IMR-90 (cell line): ENCODE measurements at regions of chr14 and their contacts with region 1.

Region 1: GRCh38 chr14:92951912-92952471 is 29.0 kb downstream of the CHGA start:
- DNase-seq: peak; percentile 48
- ATAC-seq: peak; percentile 99
- H3K4me3 ChIP-seq: no peak overlapping the region
- H3K27ac ChIP-seq: no peak overlapping the region
- H3K4me1 ChIP-seq: no peaks in the 10 kb centered on the region
- H3K27me3 ChIP-seq: no peaks in the 10 kb centered on the region
- CTCF ChIP-seq: peak; percentile 97
- POLR2A ChIP-seq: 0 out of 2 replicates have a peak, but pooled peaks have one; percentile 55
- RAD21 ChIP-seq: peak; percentile 99

Region 2: DNA sequence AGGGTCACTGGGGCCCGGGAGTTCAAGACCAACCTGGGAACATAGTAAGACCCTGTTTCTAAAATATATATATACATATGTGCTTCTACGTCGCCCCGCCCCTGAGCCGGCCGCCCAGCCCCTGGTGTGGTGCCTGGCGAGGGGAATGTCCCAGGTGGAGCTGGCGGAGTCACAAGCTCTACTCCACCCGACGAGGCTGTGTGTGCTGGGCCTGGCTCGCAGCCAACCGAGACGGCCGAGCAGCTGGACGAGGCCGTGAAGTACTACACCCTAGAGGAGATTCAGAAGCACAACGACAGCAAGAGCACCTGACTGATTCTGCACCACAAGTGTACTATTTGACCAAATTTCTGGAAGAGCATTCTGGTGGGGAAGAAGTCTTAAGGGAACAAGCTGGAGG is 185.9 kb after region 1 on chr14:
- CTCF ChIA-PET with region 1: interaction called, 9 read pairs
- POLR2A ChIA-PET with region 1: interaction called, 3 read pairs
- dilution Hi-C with region 1: no loop called
- in situ Hi-C with region 1: loop called (anchors 5 kb)
- intact Hi-C with region 1: loop called (anchors 1 kb)
- DNase-seq: peak; percentile 12
- ATAC-seq: no peak
- H3K4me3 ChIP-seq: no peak overlapping the region
- H3K27ac ChIP-seq: no peak overlapping the region
- H3K4me1 ChIP-seq: no peaks in the 10 kb centered on the region
- H3K27me3 ChIP-seq: peaks cover 9% of the 10 kb centered on the region
- CTCF ChIP-seq: no peak
- POLR2A ChIP-seq: no peak
- RAD21 ChIP-seq: 0 out of 2 replicates have a peak, but pooled peaks have one; percentile 9

Region 3: GRCh38 chr14:93184388-93185353 is 232.7 kb after region 1 on chr14 and contains the starts of genes LYSET and MOAP1:
- CTCF ChIA-PET with region 1: no interaction called
- POLR2A ChIA-PET with region 1: no interaction called
- dilution Hi-C with region 1: no loop called
- in situ Hi-C with region 1: no loop called
- intact Hi-C with region 1: loop called (anchors 2 kb)
- DNase-seq: peak; percentile 79
- ATAC-seq: peak; percentile 90
- H3K4me3 ChIP-seq: peak within 1 kb of the TSS; percentile 99
- H3K27ac ChIP-seq: peak within 1 kb of the TSS; percentile 74
- H3K4me1 ChIP-seq: no peaks in the 10 kb centered on the region
- H3K27me3 ChIP-seq: no peaks in the 10 kb centered on the region
- CTCF ChIP-seq: peak; percentile 14; the same call in 1 of the 2 replicates
- POLR2A ChIP-seq: peak; percentile 87
- RAD21 ChIP-seq: no peak
- total RNA-seq, gene LYSET: 8.3 and 10.2 TPM in 2 replicates
- total RNA-seq, gene MOAP1: 9.9 and 12.8 TPM in 2 replicates

Region 4: DNA sequence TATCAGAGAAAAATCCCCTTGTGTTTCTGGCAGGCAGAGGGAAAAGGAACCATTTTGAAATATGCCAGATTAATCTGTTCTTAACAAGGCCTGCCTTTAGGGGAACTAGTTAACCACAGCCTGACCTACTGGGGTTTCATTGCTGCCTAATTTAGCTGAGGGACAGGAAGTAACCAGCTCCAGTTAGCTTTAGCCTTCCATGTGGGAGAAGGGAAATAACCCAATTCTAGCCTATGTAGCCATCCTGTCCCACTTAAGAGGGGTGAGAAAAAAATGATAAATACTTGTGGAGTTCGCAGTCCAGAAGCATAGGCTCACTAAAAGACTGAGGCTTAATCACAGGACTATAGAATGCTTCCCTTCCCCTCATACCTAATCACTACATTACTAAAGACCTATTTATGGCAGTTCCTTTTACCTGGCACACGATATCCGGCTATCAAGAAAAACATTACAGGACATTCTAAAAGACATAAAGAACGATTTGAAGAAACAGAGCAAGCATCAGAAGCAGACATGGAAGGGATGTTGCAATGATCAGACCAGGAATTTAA is 417.8 kb after region 1 on chr14:
- CTCF ChIA-PET with region 1: no interaction called
- POLR2A ChIA-PET with region 1: no interaction called
- dilution Hi-C with region 1: no loop called
- in situ Hi-C with region 1: no loop called
- intact Hi-C with region 1: no loop called
- DNase-seq: no peak
- ATAC-seq: no peak
- H3K4me3 ChIP-seq: no peak overlapping the region
- H3K27ac ChIP-seq: no peak overlapping the region
- H3K4me1 ChIP-seq: no peaks in the 10 kb centered on the region
- H3K27me3 ChIP-seq: no peaks in the 10 kb centered on the region
- CTCF ChIP-seq: no peak
- POLR2A ChIP-seq: no peak
- RAD21 ChIP-seq: no peak